Mammary epithelial cell (primary cell): ENCODE measurements at regions of chr12 and their contacts with region 1.

Region 1: DNA sequence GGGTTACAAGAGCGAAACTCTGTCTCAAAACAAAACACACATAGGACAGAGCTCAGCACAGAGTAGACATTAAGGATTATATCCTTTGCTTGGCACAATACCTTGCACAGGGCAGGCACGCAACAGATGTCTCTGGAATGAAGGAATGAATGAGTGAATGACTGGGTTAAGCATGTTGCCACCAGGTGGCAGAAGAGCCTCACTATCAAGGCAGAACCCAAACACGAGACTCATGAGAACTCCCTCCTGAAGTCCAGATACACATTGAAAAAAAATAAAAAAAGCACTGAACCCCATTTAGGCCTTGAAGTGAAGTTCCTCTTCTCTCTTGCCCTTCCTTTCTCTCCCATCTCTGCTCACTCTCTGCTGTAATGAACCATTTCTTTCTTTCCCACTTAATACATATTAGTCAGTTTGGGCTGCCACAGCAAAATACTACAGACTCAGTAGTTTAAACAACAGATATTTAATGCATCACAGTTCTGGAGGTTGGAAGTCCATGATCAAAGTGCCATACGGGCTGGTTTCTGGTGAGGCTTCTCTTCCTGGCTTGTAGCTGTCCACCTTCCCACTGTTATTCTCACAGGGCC is 26.6 kb upstream of the LTA4H start:
- DNase-seq: peak; percentile 72
- H3K4me3 ChIP-seq: no peak overlapping the region
- H3K27ac ChIP-seq: no peak overlapping the region
- H3K4me1 ChIP-seq: no peaks in the 10 kb centered on the region
- H3K27me3 ChIP-seq: no peaks in the 10 kb centered on the region
- CTCF ChIP-seq: peak; percentile 73 to 84

Region 2: GRCh38 chr12:95674088-95674600 is 387.8 kb before region 1 on chr12:
- CTCF ChIA-PET with region 1: no interaction called
- dilution Hi-C with region 1: no loop called
- in situ Hi-C with region 1: no loop called
- intact Hi-C with region 1: no loop called
- DNase-seq: no peak
- H3K4me3 ChIP-seq: no peak overlapping the region
- H3K27ac ChIP-seq: no peak overlapping the region
- H3K4me1 ChIP-seq: no peaks in the 10 kb centered on the region
- H3K27me3 ChIP-seq: no peaks in the 10 kb centered on the region
- CTCF ChIP-seq: no peak

Region 3: DNA sequence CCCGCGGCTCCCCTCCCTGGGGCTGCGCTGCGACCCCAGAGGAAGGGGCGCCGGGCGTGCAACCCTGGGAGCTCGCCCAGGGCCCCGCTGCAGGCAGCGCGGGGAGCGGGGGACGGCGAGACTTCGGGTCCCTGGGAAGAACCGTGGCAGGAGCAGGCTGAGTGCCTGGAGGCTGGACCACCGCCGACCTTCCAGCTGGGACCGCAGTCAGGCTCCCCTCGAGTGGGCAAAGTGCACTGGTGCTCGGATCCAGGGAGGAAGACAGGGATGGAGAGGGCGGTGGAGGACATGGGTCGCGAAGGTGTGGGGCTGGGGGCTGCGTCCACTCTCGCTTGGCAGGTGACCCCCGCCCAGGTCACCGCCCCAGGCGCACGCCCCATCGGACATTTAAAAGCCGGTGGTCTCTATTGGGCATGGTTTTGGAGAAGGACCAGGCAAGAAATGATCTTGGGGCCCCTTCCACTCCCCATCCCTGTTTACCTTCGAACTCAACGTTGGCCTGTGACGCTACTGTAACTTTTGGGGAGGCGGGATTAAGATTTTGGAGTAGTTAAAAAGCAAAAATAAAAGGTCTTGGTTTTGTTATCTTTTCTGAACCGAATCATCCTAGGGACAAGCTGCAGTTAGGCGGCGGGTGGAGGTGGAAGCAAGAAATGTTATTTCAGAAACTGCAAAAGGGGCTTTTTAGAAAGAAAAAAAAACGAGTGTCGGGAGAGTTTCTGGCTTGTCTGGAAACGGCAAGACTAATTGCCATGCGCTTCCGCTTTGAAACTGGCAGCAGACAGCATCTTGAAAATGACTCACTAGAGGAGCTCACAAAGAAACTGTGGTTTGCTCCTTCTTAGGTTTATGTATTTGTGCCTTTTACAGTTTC is 133.2 kb after region 1 on chr12:
- CTCF ChIA-PET with region 1: no interaction called
- dilution Hi-C with region 1: no loop called
- in situ Hi-C with region 1: no loop called
- intact Hi-C with region 1: loop called (anchors 5 kb)
- DNase-seq: peak; percentile 84
- H3K4me3 ChIP-seq: peak overlapping the region; percentile 95 to 99 (median 98)
- H3K27ac ChIP-seq: peak overlapping the region; percentile 99
- H3K4me1 ChIP-seq: peaks cover 30% of the 10 kb centered on the region
- H3K27me3 ChIP-seq: no peaks in the 10 kb centered on the region
- CTCF ChIP-seq: no peak

Region 4: GRCh38 chr12:96219698-96220206 is 157.8 kb after region 1 on chr12:
- CTCF ChIA-PET with region 1: interaction called, 3 read pairs
- dilution Hi-C with region 1: loop called (anchors 10 kb)
- in situ Hi-C with region 1: loop called (anchors 5 kb)
- intact Hi-C with region 1: loop called (anchors 1 kb)
- DNase-seq: peak; percentile 100
- H3K4me3 ChIP-seq: peak overlapping the region; percentile 30 to 41 (median 38)
- H3K27ac ChIP-seq: peak overlapping the region; percentile 100
- H3K4me1 ChIP-seq: peaks cover 57% of the 10 kb centered on the region
- H3K27me3 ChIP-seq: no peaks in the 10 kb centered on the region
- CTCF ChIP-seq: no peak

Region 5: GRCh38 chr12:96399919-96400797 is 338.2 kb after region 1 on chr12 and contains the start of gene CDK17:
- CTCF ChIA-PET with region 1: no interaction called
- dilution Hi-C with region 1: no loop called
- in situ Hi-C with region 1: loop called in 1 of 2 experiments (anchors 25 kb)
- intact Hi-C with region 1: loop called (anchors 1 kb)
- DNase-seq: peak; percentile 80
- H3K4me3 ChIP-seq: peak within 1 kb of the TSS; percentile 66 to 83 (median 74)
- H3K27ac ChIP-seq: peak within 1 kb of the TSS; percentile 88
- H3K4me1 ChIP-seq: peaks cover 9% of the 10 kb centered on the region
- H3K27me3 ChIP-seq: no peaks in the 10 kb centered on the region
- CTCF ChIP-seq: peak in 1 of 2 donors; percentile 44
- total RNA-seq, gene CDK17: 42.5 to 64.2 TPM